Activated T-helper 2 cell treated with anti-CD3 and anti-CD28 coated beads, Interferon-gamma antibody, Interleukin-2, Interleukin-4, amounts not matched to agents 10 μg/mL and 5 μg/mL and 100 μg/mL, durations not matched to agents 14 hours and 24 hours and 36 hours (primary cell): ENCODE measurements at regions of chr4 and their contacts with region 1.

Region 1: DNA sequence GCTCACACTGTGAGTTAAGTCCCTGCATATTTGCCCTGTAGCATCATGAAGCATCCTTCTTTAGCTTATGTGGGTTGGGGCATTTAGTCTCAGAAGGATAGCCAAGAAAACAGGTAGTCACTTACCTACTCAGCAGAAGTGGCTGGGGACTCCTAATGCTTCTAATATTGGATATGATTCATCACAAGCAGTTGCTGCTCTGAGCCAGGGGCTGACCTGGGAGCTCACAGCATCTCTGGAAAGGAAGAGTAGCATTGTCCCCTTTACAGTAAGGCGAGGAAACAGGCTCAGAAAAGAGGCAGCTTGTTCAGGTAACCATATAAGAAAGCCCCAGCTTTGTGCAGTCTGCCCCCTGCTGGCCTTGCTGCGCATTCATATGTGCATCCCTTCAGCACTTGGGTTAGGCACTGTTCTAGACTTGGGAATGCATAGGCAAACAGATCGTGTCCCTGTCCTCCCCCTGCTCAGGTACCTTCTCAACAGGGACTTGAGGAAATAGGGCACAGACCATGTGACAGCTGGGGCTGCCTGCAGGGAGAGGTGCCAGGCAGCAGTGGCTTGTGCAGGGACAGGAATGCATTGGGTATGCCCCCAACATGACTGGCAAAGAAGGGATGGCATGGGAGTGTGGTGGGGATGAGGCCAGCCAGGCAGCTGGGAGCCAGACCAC is 35.7 kb upstream of the TBC1D14 start:
- DNase-seq: peak; percentile 63
- H3K4me3 Mint-ChIP-seq: no peak overlapping the region
- H3K27ac Mint-ChIP-seq: no peak overlapping the region
- H3K4me1 Mint-ChIP-seq: peaks cover 2% of the 10 kb centered on the region
- H3K27me3 Mint-ChIP-seq: no peaks in the 10 kb centered on the region

Region 2: GRCh38 chr4:6716018-6716911 is 157.7 kb before region 1 on chr4 and contains the start of gene BLOC1S4:
- intact Hi-C with region 1: loop called (anchors 1 kb)
- DNase-seq: peak; percentile 87
- H3K4me3 Mint-ChIP-seq: peak within 1 kb of the TSS; percentile 92
- H3K27ac Mint-ChIP-seq: peak within 1 kb of the TSS; percentile 95
- H3K4me1 Mint-ChIP-seq: peaks cover 24% of the 10 kb centered on the region
- H3K27me3 Mint-ChIP-seq: no peaks in the 10 kb centered on the region
- total RNA-seq, gene BLOC1S4: 18.2 and 20.8 TPM in 2 replicates

Region 3: DNA sequence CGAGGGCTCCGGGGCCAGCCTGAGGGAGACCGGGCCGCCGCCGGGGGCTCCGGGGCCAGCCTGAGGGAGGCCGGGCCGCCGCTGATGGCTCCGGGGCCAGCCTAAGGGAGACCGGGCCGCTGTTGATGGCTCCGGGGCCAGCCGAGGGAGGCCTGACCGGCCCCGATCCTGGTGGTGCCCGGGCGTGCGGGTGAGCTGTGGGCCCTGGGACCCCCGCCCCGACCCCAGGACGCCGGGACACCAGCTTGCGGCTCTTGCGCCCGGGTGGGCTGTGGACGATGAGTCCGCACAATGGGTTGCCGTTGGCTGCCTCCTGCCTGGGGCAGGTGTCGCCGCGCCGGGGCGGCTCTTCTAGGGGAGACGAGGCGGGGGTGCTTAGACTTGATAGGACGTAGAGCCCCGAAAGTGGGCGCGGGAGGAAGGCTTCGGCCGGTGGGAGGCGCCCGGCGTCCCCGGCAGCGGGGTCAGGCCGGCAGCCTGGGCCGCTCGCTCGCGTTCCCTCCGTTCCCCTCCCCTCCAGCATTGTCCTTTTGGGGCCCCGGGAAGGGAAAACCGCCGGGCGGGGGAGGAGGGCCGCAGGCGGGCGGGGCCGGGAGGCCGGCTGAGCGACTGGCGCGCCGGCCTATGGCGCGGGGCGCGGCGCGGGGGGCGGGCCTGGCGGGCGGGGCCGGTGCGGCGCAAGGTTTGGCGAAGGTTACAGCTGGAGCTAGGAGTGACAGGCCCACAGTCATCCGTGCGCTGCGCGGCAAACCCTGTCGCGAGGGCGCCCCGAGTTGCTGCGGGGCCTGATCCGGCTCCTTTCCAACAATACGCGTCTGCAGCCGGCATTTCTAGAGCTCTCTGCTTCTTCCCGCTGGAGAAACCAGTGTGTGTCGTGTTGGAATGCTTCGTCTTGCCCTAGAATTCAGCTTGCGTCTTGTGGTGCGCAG is 90.6 kb before region 1 on chr4:
- intact Hi-C with region 1: loop called (anchors 5 kb)
- DNase-seq: peak; percentile 86
- H3K4me3 Mint-ChIP-seq: peak overlapping the region; percentile 79
- H3K27ac Mint-ChIP-seq: peak overlapping the region; percentile 75
- H3K4me1 Mint-ChIP-seq: peaks cover 55% of the 10 kb centered on the region
- H3K27me3 Mint-ChIP-seq: no peaks in the 10 kb centered on the region